ENCODE measurements at regions of chr15 and their contacts with region 1.

Region 1: GRCh38 chr15:59751552-59752413 is 62.7 kb upstream of the BNIP2 start:
- DNase-seq: peak; percentile 44 to 76 (median 70)
- H3K4me3 ChIP-seq: no peak overlapping the region
- H3K4me3 Mint-ChIP-seq: peak overlapping the region in 3 of 8 donors; percentile 3 to 35 (median 13)
- H3K27ac ChIP-seq: no peak overlapping the region
- H3K27ac Mint-ChIP-seq: peak overlapping the region in 5 of 7 donors; percentile 5 to 70 (median 61)
- H3K4me1 ChIP-seq: peaks cover 10% of the 10 kb centered on the region
- H3K4me1 Mint-ChIP-seq: peaks cover 10 to 16% (median 13%) of the 10 kb centered on the region in 4 donors
- H3K27me3 ChIP-seq: no peaks in the 10 kb centered on the region
- H3K27me3 Mint-ChIP-seq: peaks cover 7 to 12% of the 10 kb centered on the region in 2 donors

Region 2: DNA sequence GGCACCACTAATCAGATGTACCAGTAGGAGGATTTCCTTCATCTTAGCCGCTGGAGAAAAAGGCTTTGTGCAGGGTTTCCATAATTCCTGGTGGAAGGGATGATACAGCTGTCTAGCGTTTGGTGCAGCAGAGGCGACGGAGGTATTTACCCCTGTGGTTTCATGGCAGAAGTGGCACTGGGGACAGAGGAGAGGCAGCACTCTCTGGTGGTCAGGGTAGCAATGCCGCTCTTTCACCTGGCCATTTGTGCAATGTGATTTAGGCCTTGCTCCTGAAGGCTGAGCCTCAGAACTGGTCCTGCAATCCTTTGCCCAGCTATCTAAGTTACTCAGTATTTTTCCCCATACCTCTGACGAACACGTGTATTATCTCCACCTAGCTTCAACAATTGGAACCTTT is 15.6 kb before region 1 on chr15:
- CTCF ChIA-PET with region 1: no interaction called
- POLR2A ChIA-PET with region 1: no interaction called
- intact Hi-C with region 1: no loop called
- DNase-seq: no peak
- H3K4me3 ChIP-seq: no peak overlapping the region
- H3K4me3 Mint-ChIP-seq: no peak overlapping the region
- H3K27ac ChIP-seq: no peak overlapping the region
- H3K27ac Mint-ChIP-seq: no peak overlapping the region
- H3K4me1 ChIP-seq: no peaks in the 10 kb centered on the region
- H3K4me1 Mint-ChIP-seq: no peaks in the 10 kb centered on the region
- H3K27me3 ChIP-seq: no peaks in the 10 kb centered on the region
- H3K27me3 Mint-ChIP-seq: peaks cover 0 to 2% of the 10 kb centered on the region in 2 donors

Region 3: DNA sequence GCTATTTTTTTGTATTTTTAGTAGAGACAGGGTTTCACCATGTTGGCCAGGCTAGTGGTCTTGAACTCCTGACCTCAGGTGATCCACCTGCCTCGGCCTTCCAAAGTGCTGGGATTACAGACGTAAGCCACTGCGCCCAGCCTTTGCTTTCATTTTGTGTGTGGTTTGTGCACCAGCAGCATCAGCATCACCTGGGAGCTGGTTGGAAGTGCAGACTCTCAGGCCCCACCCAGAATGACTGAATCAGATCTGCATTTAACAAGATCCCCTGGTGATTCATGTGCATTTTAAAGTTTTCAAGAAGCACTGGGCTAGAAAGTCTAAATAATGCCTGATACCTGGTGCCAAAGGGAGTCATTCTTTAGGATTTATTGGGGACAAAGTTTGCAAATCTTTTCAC is 10.8 kb after region 1 on chr15:
- CTCF ChIA-PET with region 1: interaction called, 22 read pairs
- POLR2A ChIA-PET with region 1: no interaction called
- intact Hi-C with region 1: no loop called
- DNase-seq: no peak
- H3K4me3 ChIP-seq: no peak overlapping the region
- H3K4me3 Mint-ChIP-seq: peak overlapping the region in 1 of 8 donors; percentile 17
- H3K27ac ChIP-seq: no peak overlapping the region
- H3K27ac Mint-ChIP-seq: no peak overlapping the region
- H3K4me1 ChIP-seq: no peaks in the 10 kb centered on the region
- H3K4me1 Mint-ChIP-seq: peaks cover 0 to 7% (median 3%) of the 10 kb centered on the region in 4 donors
- H3K27me3 ChIP-seq: no peaks in the 10 kb centered on the region
- H3K27me3 Mint-ChIP-seq: peaks cover 1 to 3% of the 10 kb centered on the region in 2 donors

Region 4: GRCh38 chr15:59779110-59779509 is 27.3 kb after region 1 on chr15:
- CTCF ChIA-PET with region 1: no interaction called
- POLR2A ChIA-PET with region 1: no interaction called
- intact Hi-C with region 1: no loop called
- DNase-seq: no peak
- H3K4me3 ChIP-seq: no peak overlapping the region
- H3K4me3 Mint-ChIP-seq: no peak overlapping the region
- H3K27ac ChIP-seq: no peak overlapping the region
- H3K27ac Mint-ChIP-seq: no peak overlapping the region
- H3K4me1 ChIP-seq: peaks cover 8% of the 10 kb centered on the region
- H3K4me1 Mint-ChIP-seq: peaks cover 2 to 7% (median 5%) of the 10 kb centered on the region in 4 donors
- H3K27me3 ChIP-seq: no peaks in the 10 kb centered on the region
- H3K27me3 Mint-ChIP-seq: no peaks in the 10 kb centered on the region

Region 5: GRCh38 chr15:59917504-59918157 is 165.8 kb after region 1 on chr15:
- CTCF ChIA-PET with region 1: interaction called, 80 read pairs
- POLR2A ChIA-PET with region 1: interaction called, 3 read pairs
- intact Hi-C with region 1: loop called (anchors 1 kb)
- DNase-seq: peak; percentile 51 to 66 (median 61)
- H3K4me3 ChIP-seq: no peak overlapping the region
- H3K4me3 Mint-ChIP-seq: no peak overlapping the region
- H3K27ac ChIP-seq: no peak overlapping the region
- H3K27ac Mint-ChIP-seq: peak overlapping the region in 2 of 7 donors; percentile 19 to 64
- H3K4me1 ChIP-seq: peaks cover 20% of the 10 kb centered on the region
- H3K4me1 Mint-ChIP-seq: peaks cover 12 to 25% (median 14%) of the 10 kb centered on the region in 4 donors
- H3K27me3 ChIP-seq: no peaks in the 10 kb centered on the region
- H3K27me3 Mint-ChIP-seq: peaks cover 5 to 7% of the 10 kb centered on the region in 2 donors

Region 6: DNA sequence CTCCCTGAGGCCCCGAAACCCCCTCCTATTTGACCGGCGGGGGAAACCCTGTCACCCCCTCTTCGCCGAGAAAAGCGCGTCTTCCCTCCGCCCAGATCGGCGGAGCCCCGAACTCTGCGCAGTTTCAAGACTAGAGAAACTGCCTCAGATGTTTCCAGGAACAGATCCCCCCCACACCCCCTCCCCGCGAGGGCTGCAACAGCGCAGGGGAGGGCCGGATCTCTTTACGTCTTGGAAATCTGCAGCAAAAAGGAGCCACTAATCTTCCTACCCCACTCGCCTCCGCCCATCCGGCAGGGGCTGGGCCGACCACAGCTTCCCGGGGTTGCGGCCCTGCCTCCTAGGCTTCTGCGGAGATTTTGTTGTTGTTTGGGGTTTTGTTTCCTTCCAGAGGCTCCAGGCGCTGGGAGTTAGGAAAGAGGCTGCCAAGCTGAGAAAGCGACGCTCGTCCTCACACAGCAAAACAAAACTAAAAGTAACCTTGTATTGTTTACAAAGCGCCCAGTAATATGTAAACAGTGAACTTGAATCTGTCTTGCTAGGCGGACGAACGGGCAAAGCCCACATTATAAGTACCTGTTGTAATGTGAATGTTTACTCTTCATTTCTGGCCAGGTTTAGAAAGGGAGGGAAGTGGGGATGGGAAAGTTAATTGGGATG is 254.6 kb after region 1 on chr15:
- CTCF ChIA-PET with region 1: interaction called, 3 read pairs
- POLR2A ChIA-PET with region 1: interaction called, 3 read pairs
- intact Hi-C with region 1: loop called (anchors 5 kb)
- DNase-seq: peak; percentile 62 to 77 (median 76)
- H3K4me3 ChIP-seq: peak overlapping the region; percentile 45 to 66
- H3K4me3 Mint-ChIP-seq: peak overlapping the region; percentile 86 to 95 (median 89)
- H3K27ac ChIP-seq: no peak overlapping the region
- H3K27ac Mint-ChIP-seq: peak overlapping the region; percentile 4 to 96 (median 82)
- H3K4me1 ChIP-seq: peaks cover 40% of the 10 kb centered on the region
- H3K4me1 Mint-ChIP-seq: peaks cover 22 to 50% (median 27%) of the 10 kb centered on the region in 4 donors
- H3K27me3 ChIP-seq: peaks cover 85% of the 10 kb centered on the region
- H3K27me3 Mint-ChIP-seq: peaks cover 73 to 77% of the 10 kb centered on the region in 2 donors

Region 7: DNA sequence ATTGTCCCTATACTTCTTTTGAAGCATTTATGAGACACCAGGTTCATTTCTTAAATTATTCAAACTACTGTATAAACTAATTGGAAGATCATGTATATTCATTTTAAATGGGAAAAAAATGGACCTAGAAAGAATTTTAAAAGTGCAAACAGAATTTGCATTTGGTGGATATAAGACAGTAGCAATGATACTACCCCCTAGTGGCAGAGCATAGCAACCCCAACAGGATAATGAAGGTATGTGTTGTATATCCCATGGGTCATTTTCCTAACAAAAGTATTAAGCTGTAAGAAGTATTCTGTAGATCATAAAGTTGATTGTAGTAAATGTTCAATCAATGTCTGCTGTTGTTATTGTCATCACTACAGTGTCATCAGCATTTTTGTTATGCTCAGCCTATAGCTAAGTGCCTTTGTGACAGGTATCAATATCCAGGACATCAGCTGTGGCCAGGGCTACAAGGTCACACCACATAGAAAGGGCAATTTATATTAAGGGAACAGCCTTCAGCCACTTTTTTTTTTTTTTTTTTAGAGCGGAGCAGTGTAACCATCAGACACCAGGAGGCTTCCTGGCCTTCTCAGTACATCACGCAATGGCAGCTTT is 428.1 kb after region 1 on chr15:
- CTCF ChIA-PET with region 1: interaction called, 48 read pairs
- POLR2A ChIA-PET with region 1: interaction called, 4 read pairs
- intact Hi-C with region 1: loop called (anchors 1 kb)
- DNase-seq: peak; percentile 35 to 51 (median 45)
- H3K4me3 ChIP-seq: no peak overlapping the region
- H3K4me3 Mint-ChIP-seq: no peak overlapping the region
- H3K27ac ChIP-seq: no peak overlapping the region
- H3K27ac Mint-ChIP-seq: no peak overlapping the region
- H3K4me1 ChIP-seq: no peaks in the 10 kb centered on the region
- H3K4me1 Mint-ChIP-seq: no peaks in the 10 kb centered on the region
- H3K27me3 ChIP-seq: no peaks in the 10 kb centered on the region
- H3K27me3 Mint-ChIP-seq: peaks cover 8 to 18% of the 10 kb centered on the region in 2 donors